Activated B cell treated with CpG ODN at 0.5 μM for 24 hours (primary cell): ENCODE measurements at regions of chr12 and their contacts with region 1.

Region 1: DNA sequence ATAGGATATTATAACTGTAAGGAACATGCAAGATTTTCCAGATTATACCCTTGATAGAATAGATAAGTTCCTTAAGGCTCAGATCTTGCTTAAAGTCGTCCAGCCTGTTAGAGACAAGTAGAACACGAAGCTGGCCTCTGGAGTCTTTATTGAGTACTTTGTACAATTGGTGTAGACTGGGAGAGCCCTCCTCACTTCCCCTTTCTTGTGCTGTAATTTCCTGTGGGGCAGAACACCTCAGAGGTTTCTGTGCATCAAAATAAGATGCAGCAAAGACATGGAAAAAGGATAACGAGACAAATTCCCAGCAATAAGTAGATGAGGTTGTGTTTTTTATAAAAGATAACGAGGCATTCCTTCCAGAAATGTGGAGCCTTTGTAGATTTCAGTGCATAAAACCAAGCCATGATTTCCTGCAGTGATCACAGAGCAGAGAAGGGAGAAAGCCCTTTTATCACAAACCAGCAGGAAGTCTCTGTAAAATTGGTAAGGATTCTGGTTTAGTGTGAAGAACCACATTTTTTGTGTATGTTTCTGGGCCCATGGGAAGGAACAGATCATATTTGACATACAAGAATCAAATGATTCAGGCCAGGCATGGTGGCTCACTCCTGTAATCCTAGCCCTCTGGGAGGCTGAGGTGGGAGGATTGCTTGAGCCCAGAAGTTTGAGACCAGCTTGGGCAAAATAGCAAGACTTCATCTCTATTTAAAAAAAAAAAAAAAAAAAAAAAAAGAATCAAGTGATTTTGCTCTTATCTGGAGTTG is 18.0 kb downstream of the GPRC5A start:
- DNase-seq: no peak
- ATAC-seq: peak; percentile 70
- H3K4me3 Mint-ChIP-seq: peak overlapping the region; percentile 15
- H3K27ac Mint-ChIP-seq: no peak overlapping the region
- H3K4me1 Mint-ChIP-seq: peaks cover 20% of the 10 kb centered on the region
- H3K27me3 Mint-ChIP-seq: peaks cover 5% of the 10 kb centered on the region
- CTCF ChIP-seq: no peak

Region 2: GRCh38 chr12:12890815-12891645 is 18.4 kb before region 1 on chr12 and contains the start of gene GPRC5A:
- CTCF ChIA-PET with region 1: no interaction called
- POLR2A ChIA-PET with region 1: no interaction called
- intact Hi-C with region 1: loop called (anchors 1 kb)
- DNase-seq: no peak
- ATAC-seq: peak; percentile 37
- H3K4me3 Mint-ChIP-seq: peak within 1 kb of the TSS; percentile 81
- H3K27ac Mint-ChIP-seq: no peak within 1 kb of the TSS
- H3K4me1 Mint-ChIP-seq: peaks cover 12% of the 10 kb centered on the region
- H3K27me3 Mint-ChIP-seq: peaks cover 46% of the 10 kb centered on the region
- CTCF ChIP-seq: no peak
- total RNA-seq, gene GPRC5A: not detected in 2 replicates

Region 3: GRCh38 chr12:12934556-12934955 is 25.1 kb after region 1 on chr12:
- CTCF ChIA-PET with region 1: no interaction called
- POLR2A ChIA-PET with region 1: no interaction called
- intact Hi-C with region 1: no loop called
- DNase-seq: no peak
- ATAC-seq: no peak
- H3K4me3 Mint-ChIP-seq: no peak overlapping the region
- H3K27ac Mint-ChIP-seq: no peak overlapping the region
- H3K4me1 Mint-ChIP-seq: no peaks in the 10 kb centered on the region
- H3K27me3 Mint-ChIP-seq: peaks cover 10% of the 10 kb centered on the region
- CTCF ChIP-seq: no peak